PC-3 (cell line): ENCODE measurements at regions of chr6 and their contacts with region 1.

Region 1: DNA sequence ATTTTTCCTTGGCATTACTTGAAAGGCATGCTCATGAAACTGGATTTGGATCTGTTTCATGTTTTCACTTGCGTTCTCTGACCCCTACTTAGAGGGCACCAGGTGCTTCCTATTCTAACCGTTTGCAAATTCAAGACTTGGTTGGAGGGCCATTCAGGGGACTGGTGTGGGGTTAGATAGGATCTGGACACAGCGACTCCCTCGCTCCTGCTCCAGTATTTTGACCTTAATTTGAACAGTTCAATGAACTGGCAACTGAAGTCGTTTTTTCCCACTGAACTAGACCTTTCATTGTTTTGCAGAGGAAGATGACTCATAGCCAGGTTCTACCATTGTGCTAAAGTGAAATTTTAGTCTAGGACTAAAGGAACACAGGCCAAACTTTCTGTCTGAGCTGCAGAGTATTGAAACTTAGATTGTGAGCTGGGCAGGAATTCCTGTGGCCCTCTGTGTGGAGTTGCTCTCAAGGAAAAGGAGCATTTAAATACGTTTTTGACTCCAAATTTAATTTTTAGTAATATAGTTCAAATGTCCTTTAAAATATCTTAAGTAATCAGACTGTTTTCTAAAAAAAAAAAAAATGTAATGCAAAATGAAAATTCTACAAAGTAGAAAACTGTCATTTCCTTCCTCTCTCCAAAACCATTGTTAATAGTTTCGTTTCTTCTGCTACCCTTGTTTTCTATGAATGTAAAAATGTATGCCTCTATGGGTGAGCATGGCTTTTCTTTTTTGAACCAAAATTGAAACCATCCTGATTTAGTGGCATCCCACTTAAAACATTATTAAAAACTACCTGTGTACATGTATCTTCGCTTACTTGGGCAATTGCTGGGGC is 64.8 kb downstream of the UTRN start:
- DNase-seq: peak; percentile 66
- ATAC-seq: peak; percentile 80
- H3K4me3 ChIP-seq: peak overlapping the region; percentile 26; the same call in 1 of the 2 replicates
- H3K27ac ChIP-seq: peak overlapping the region; percentile 77
- H3K4me1 ChIP-seq: peaks cover 30% of the 10 kb centered on the region
- H3K27me3 ChIP-seq: no peaks in the 10 kb centered on the region
- CTCF ChIP-seq: no peak

Region 2: GRCh38 chr6:144284783-144285547 is 64.9 kb before region 1 on chr6 and contains the start of gene UTRN:
- CTCF ChIA-PET with region 1: no interaction called
- POLR2A ChIA-PET with region 1: no interaction called
- intact Hi-C with region 1: no loop called
- DNase-seq: peak; percentile 69
- ATAC-seq: peak; percentile 50
- H3K4me3 ChIP-seq: peak within 1 kb of the TSS; percentile 92
- H3K27ac ChIP-seq: peak within 1 kb of the TSS; percentile 94
- H3K4me1 ChIP-seq: peaks cover 14% of the 10 kb centered on the region
- H3K27me3 ChIP-seq: no peaks in the 10 kb centered on the region
- CTCF ChIP-seq: no peak
- total RNA-seq, gene UTRN: 49.0 and 58.3 TPM in 2 replicates

Region 3: DNA sequence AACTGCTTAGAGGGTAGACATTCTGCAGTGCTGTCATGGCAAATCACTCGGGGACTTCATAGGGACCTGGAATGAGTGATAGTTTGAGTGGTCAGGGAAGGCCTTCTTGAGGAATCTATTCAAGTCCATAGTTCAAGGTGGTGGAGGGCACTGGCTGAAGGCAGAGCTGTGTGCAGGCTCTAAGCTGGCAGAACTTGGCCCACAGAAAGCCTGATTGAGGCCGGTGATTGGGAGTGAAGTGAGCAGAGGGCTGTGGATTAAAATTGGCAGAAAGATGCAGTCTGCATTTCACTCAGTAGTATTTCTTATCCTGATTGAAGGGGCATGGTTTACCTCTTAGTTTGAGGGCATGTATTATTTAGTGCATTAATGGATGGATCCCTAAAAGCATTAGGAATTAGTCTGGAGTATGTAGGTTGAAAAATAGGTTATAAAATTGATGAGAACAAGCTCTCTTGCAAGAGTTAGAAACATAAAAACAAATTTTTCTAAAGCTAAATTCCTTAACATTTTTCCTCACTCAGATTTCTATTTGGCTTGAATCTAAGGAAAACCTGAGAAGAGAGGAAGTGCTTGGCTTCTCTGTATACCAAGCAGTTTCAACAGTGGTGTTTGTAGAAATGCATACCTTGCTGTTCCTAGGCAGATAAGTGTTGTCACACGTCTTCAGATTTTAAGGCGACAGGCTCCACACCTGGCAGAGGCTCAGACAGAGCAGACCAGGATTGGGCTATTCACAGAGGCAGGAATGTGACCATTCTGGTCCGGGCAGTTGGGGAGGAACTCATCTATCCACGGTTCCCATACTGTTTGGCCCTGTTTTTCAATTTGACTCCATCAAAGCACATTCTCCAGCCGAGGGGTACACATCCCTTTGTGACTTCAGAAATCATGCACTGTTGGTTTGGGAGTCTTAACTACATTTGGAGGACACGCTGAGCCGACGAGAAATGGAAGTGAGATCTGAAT is 19.6 kb before region 1 on chr6:
- CTCF ChIA-PET with region 1: no interaction called
- POLR2A ChIA-PET with region 1: no interaction called
- intact Hi-C with region 1: no loop called
- DNase-seq: peak; percentile 87
- ATAC-seq: peak; percentile 67
- H3K4me3 ChIP-seq: peak overlapping the region; percentile 45
- H3K27ac ChIP-seq: 0 out of 2 replicates have a peak overlapping the region, but pooled peaks have one; percentile 6
- H3K4me1 ChIP-seq: peaks cover 23% of the 10 kb centered on the region
- H3K27me3 ChIP-seq: no peaks in the 10 kb centered on the region
- CTCF ChIP-seq: no peak

Region 4: GRCh38 chr6:144411332-144412190 is 61.7 kb after region 1 on chr6:
- CTCF ChIA-PET with region 1: no interaction called
- POLR2A ChIA-PET with region 1: no interaction called
- intact Hi-C with region 1: loop called (anchors 10 kb)
- DNase-seq: peak; percentile 56
- ATAC-seq: peak; percentile 39
- H3K4me3 ChIP-seq: peak overlapping the region; percentile 66
- H3K27ac ChIP-seq: peak overlapping the region; percentile 85
- H3K4me1 ChIP-seq: peaks cover 46% of the 10 kb centered on the region
- H3K27me3 ChIP-seq: no peaks in the 10 kb centered on the region
- CTCF ChIP-seq: no peak